B cell (primary cell): ENCODE measurements at regions of chr17 and their contacts with region 1.

Region 1: GRCh38 chr17:63697341-63698286 is 2.3 kb downstream of the LIMD2 start:
- DNase-seq: peak; percentile 96
- ATAC-seq: peak; percentile 39
- H3K4me3 ChIP-seq: peak overlapping the region; percentile 70 to 100 (median 96)
- H3K4me3 Mint-ChIP-seq: peak overlapping the region; percentile 94
- H3K27ac ChIP-seq: peak overlapping the region; percentile 82 to 95
- H3K27ac Mint-ChIP-seq: peak overlapping the region; percentile 98
- H3K4me1 ChIP-seq: peaks cover 54 to 66% of the 10 kb centered on the region in 2 donors
- H3K4me1 Mint-ChIP-seq: peaks cover 66% of the 10 kb centered on the region
- H3K27me3 ChIP-seq: no peaks in the 10 kb centered on the region
- H3K27me3 Mint-ChIP-seq: no peaks in the 10 kb centered on the region
- CTCF ChIP-seq: peak; percentile 85

Region 2: DNA sequence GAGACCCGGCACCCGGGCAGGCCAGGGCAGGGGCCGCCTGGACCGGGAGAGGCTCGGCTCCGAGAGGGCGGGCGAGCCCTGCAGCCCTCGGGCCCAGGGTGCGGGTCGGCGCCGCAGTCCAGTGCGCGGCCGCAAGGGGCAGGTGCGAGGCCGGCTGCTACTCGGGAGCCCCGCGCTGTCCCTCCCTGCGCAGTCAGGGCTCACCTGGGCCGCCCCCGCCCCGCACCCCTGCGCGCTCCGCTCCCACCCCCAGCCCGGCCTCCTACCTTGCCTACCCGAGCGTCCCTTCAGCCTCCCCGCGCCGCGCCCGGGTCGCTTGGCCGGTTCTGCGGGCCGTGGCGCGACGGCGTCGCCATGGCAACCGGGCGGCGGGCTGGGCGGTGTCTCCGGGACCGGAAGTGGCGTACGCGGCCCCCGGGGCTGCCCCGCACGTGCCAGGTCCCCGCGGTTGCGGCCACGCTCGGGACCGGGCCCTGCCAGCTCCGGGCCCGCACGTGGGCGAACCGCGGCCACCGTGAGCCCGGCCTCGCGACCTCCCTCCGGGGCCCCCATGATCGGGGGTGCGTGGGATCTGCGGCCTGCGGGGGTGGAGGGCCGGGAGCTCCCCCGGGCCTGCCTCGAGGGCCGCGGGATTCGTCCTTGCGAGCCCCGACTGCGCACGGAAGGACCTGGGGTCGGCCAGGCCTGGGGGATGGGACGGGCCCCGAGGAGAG is 251.5 kb before region 1 on chr17 and contains the start of gene CYB561:
- CTCF ChIA-PET with region 1: interaction called, 3 read pairs
- POLR2A ChIA-PET with region 1: no interaction called
- intact Hi-C with region 1: loop called (anchors 5 kb)
- DNase-seq: peak; percentile 94
- ATAC-seq: peak; percentile 73
- H3K4me3 ChIP-seq: peak within 1 kb of the TSS in 4 of 5 experiments; percentile 54 to 70 (median 61)
- H3K4me3 Mint-ChIP-seq: peak within 1 kb of the TSS; percentile 77
- H3K27ac ChIP-seq: peak within 1 kb of the TSS; percentile 38 to 79
- H3K27ac Mint-ChIP-seq: peak within 1 kb of the TSS; percentile 81
- H3K4me1 ChIP-seq: peaks cover 13 to 24% of the 10 kb centered on the region in 2 donors
- H3K4me1 Mint-ChIP-seq: peaks cover 15% of the 10 kb centered on the region
- H3K27me3 ChIP-seq: peaks cover 0 to 2% (median 0%) of the 10 kb centered on the region in 4 experiments
- H3K27me3 Mint-ChIP-seq: peaks cover 6% of the 10 kb centered on the region
- CTCF ChIP-seq: peak; percentile 59
- total RNA-seq, gene CYB561: 3.6 and 4.9 TPM in 2 replicates

Region 3: GRCh38 chr17:63714547-63715277 is 17.1 kb after region 1 on chr17:
- CTCF ChIA-PET with region 1: interaction called, 82 read pairs
- POLR2A ChIA-PET with region 1: interaction called, 71 read pairs
- intact Hi-C with region 1: loop called (anchors 1 kb)
- DNase-seq: no peak
- ATAC-seq: no peak
- H3K4me3 ChIP-seq: no peak overlapping the region
- H3K4me3 Mint-ChIP-seq: no peak overlapping the region
- H3K27ac ChIP-seq: no peak overlapping the region
- H3K27ac Mint-ChIP-seq: no peak overlapping the region
- H3K4me1 ChIP-seq: peaks cover 6 to 8% of the 10 kb centered on the region in 2 donors
- H3K4me1 Mint-ChIP-seq: peaks cover 8% of the 10 kb centered on the region
- H3K27me3 ChIP-seq: no peaks in the 10 kb centered on the region
- H3K27me3 Mint-ChIP-seq: no peaks in the 10 kb centered on the region
- CTCF ChIP-seq: no peak

Region 4: DNA sequence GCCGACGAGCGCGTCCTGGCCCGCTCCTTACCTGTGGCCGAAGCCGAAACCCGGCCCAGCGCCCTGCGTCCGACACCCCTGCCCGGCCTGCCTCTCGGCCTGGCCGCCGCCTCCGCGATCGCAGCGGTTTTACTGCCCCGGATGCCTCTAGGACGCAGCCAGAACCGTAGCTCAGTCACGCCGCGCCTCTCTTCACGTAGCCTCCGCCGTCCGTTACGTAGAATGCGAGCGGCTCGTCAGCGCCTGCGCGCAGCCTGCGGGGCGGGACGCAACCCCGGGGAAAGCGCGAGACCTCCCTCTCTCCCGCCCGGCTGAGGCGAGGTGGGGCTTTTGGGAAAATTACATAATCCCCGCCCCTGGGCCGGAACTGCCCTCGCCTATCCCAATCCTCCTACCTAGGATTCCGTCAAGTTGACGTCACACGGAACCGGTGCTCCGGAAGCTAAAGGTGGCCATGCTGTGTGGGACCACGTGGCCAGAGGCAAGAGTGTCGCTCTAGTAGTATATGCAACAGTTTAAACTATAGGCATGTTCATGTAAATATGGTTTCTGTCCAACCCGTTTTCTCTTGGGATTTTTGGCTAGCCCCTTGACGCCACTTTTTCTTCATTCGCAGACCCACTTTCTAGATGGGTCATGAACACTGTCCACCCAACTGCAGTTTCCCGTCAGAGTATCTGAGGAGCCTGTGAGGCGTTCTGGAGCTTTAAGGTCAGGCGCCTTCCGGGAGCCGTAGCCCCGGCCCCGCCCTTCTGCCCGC is 75.9 kb after region 1 on chr17 and contains the start of gene CCDC47:
- CTCF ChIA-PET with region 1: interaction called, 12 read pairs
- POLR2A ChIA-PET with region 1: interaction called, 113 read pairs
- intact Hi-C with region 1: loop called (anchors 1 kb)
- DNase-seq: peak; percentile 99
- ATAC-seq: peak; percentile 78
- H3K4me3 ChIP-seq: peak within 1 kb of the TSS; percentile 78 to 99 (median 90)
- H3K4me3 Mint-ChIP-seq: peak within 1 kb of the TSS; percentile 98
- H3K27ac ChIP-seq: peak within 1 kb of the TSS; percentile 78 to 94
- H3K27ac Mint-ChIP-seq: peak within 1 kb of the TSS; percentile 99
- H3K4me1 ChIP-seq: peaks cover 28 to 34% of the 10 kb centered on the region in 2 donors
- H3K4me1 Mint-ChIP-seq: peaks cover 51% of the 10 kb centered on the region
- H3K27me3 ChIP-seq: no peaks in the 10 kb centered on the region
- H3K27me3 Mint-ChIP-seq: no peaks in the 10 kb centered on the region
- CTCF ChIP-seq: no peak
- total RNA-seq, gene CCDC47: 36.2 and 39.7 TPM in 2 replicates

Region 5: DNA sequence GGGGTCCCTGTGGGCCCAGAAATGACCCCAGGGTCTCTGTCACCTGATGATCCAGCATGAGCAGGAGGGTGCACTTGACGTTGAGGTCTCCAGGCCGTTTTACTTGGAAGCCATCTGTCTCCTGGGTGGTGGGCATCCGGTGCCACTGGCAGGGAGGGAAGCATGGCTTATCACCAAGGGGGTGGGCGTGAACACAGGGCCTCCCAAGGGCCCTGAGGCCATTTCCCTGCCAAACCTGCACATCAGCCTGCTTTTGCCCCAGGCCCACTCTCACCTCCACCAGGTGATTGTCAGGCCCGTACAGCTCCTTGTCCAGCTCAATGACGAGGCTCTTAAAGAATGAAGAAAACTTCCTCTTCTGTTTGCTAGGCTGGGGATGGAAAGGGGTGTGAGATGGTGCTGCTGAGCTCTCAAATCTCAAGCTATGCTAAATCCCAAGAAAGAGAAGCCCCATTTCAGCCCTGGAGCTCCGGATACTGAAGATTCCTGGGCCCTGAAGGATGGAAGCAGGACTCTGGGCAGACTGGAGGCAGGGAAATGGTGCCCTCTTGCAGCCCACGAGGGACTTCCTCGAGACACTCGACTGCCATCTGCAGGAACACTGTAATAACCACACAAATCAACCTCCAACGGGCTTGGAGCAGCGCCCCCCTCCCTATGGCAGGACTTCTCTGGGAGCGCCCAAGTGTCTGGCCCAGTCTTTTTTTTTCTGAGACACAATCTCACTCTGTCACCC is 137.0 kb after region 1 on chr17:
- CTCF ChIA-PET with region 1: interaction called, 6 read pairs
- POLR2A ChIA-PET with region 1: interaction called, 5 read pairs
- intact Hi-C with region 1: loop called (anchors 2 kb)
- DNase-seq: peak; percentile 77
- ATAC-seq: peak; percentile 86
- H3K4me3 ChIP-seq: no peak overlapping the region
- H3K4me3 Mint-ChIP-seq: no peak overlapping the region
- H3K27ac ChIP-seq: peak overlapping the region in 1 of 2 donors; percentile 13
- H3K27ac Mint-ChIP-seq: peak overlapping the region; percentile 72
- H3K4me1 ChIP-seq: peaks cover 26 to 36% of the 10 kb centered on the region in 2 donors
- H3K4me1 Mint-ChIP-seq: peaks cover 45% of the 10 kb centered on the region
- H3K27me3 ChIP-seq: no peaks in the 10 kb centered on the region
- H3K27me3 Mint-ChIP-seq: no peaks in the 10 kb centered on the region
- CTCF ChIP-seq: peak; percentile 73